A549 (cell line): ENCODE measurements at regions of chr5 and their contacts with region 1.

Region 1: GRCh38 chr5:132180134-132180745 is 47.4 kb downstream of the P4HA2 start:
- DNase-seq: peak; percentile 54 to 69
- ATAC-seq: peak; percentile 75 to 88
- H3K4me3 ChIP-seq: no peak overlapping the region
- H3K27ac ChIP-seq: no peak overlapping the region
- H3K4me1 ChIP-seq: 0 out of 3 replicates have a peak, but pooled peaks cover 3% of the 10 kb centered on the region
- CTCF ChIP-seq: peak; percentile 76
- EP300 ChIP-seq: no peak
- POLR2A ChIP-seq: no peak
- RAD21 ChIP-seq: peak; percentile 70 to 81

Region 2: GRCh38 chr5:132050136-132050535 is 130.1 kb before region 1 on chr5:
- CTCF ChIA-PET with region 1: no interaction called
- POLR2A ChIA-PET with region 1: no interaction called
- DNase-seq: no peak
- ATAC-seq: no peak
- H3K4me3 ChIP-seq: no peak overlapping the region
- H3K27ac ChIP-seq: no peak overlapping the region
- H3K4me1 ChIP-seq: no peaks in the 10 kb centered on the region
- CTCF ChIP-seq: no peak
- EP300 ChIP-seq: no peak
- POLR2A ChIP-seq: no peak
- RAD21 ChIP-seq: no peak

Region 3: DNA sequence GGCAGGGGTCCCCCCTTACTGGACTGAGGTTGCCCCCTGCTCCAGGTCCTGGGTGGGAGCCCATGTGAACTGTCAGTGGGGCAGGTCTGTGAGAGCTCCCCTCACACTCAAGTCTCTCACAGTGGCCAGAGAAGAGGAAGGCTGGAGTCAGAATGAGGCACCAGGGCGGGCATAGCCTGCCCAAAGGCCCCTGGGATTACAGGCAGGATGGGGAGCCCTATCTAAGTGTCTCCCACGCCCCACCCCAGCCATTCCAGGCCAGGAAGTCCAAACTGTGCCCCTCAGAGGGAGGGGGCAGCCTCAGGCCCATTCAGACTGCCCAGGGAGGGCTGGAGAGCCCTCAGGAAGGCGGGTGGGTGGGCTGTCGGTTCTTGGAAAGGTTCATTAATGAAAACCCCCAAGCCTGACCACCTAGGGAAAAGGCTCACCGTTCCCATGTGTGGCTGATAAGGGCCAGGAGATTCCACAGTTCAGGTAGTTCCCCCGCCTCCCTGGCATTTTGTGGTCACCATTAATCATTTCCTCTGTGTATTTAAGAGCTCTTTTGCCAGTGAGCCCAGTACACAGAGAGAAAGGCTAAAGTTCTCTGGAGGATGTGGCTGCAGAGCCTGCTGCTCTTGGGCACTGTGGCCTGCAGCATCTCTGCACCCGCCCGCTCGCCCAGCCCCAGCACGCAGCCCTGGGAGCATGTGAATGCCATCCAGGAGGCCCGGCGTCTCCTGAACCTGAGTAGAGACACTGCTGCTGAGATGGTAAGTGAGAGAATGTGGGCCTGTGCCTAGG is 106.8 kb before region 1 on chr5 and contains the start of gene CSF2:
- CTCF ChIA-PET with region 1: interaction called, 10 read pairs
- POLR2A ChIA-PET with region 1: no interaction called
- DNase-seq: no peak
- ATAC-seq: peak in 1 of 2 experiments; percentile 44; a peak in 3 of 6 replicates
- H3K4me3 ChIP-seq: no peak within 1 kb of the TSS
- H3K27ac ChIP-seq: peak within 1 kb of the TSS in 1 of 2 experiments; percentile 61; a peak in 2 of 6 replicates
- H3K4me1 ChIP-seq: peaks cover 11% of the 10 kb centered on the region; the same call in 2 of the 3 replicates
- CTCF ChIP-seq: no peak
- EP300 ChIP-seq: no peak
- POLR2A ChIP-seq: no peak
- RAD21 ChIP-seq: no peak
- polyA plus RNA-seq, gene CSF2: 0.21 TPM in 1 of 2 replicates, not detected in the other

Region 4: GRCh38 chr5:132190161-132190817 is 10.0 kb after region 1 on chr5:
- CTCF ChIA-PET with region 1: interaction called, 52 read pairs
- POLR2A ChIA-PET with region 1: no interaction called
- DNase-seq: peak; percentile 80 to 85
- ATAC-seq: peak; percentile 100
- H3K4me3 ChIP-seq: no peak overlapping the region
- H3K27ac ChIP-seq: no peak overlapping the region
- H3K4me1 ChIP-seq: no peaks in the 10 kb centered on the region
- CTCF ChIP-seq: peak; percentile 59
- EP300 ChIP-seq: no peak
- POLR2A ChIP-seq: no peak
- RAD21 ChIP-seq: peak; percentile 29 to 51; a peak in 2 of 5 replicates

Region 5: GRCh38 chr5:132203464-132203818 is 23.2 kb after region 1 on chr5:
- CTCF ChIA-PET with region 1: interaction called, 14 read pairs
- POLR2A ChIA-PET with region 1: no interaction called
- DNase-seq: no peak
- ATAC-seq: no peak
- H3K4me3 ChIP-seq: no peak overlapping the region
- H3K27ac ChIP-seq: no peak overlapping the region
- H3K4me1 ChIP-seq: no peaks in the 10 kb centered on the region
- CTCF ChIP-seq: no peak
- EP300 ChIP-seq: no peak
- POLR2A ChIP-seq: no peak
- RAD21 ChIP-seq: no peak

Region 6: DNA sequence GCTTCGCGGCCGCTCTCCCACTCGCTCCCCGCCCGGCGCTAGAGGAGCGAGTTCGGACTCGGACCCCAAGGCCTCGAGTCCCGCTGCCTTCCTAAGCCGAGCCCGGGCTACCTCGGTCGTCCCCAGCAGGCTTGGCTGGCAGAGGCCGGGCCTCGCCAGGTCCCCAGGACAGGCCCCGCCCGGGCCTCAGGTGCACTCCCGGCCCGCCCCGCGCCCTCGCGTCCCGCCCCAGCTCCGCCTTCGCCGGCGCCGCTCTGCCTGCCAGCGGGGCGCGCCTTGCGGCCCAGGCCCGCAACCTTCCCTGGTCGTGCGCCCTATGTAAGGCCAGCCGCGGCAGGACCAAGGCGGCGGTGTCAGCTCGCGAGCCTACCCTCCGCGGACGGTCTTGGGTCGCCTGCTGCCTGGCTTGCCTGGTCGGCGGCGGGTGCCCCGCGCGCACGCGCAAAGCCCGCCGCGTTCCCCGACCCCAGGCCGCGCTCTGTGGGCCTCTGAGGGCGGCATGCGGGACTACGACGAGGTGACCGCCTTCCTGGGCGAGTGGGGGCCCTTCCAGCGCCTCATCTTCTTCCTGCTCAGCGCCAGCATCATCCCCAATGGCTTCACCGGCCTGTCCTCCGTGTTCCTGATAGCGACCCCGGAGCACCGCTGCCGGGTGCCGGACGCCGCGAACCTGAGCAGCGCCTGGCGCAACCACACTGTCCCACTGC is 189.4 kb after region 1 on chr5 and contains the start of gene SLC22A5:
- CTCF ChIA-PET with region 1: interaction called, 11 read pairs
- POLR2A ChIA-PET with region 1: no interaction called
- DNase-seq: peak; percentile 62 to 84
- ATAC-seq: peak; percentile 82 to 85
- H3K4me3 ChIP-seq: peak within 1 kb of the TSS; percentile 87
- H3K27ac ChIP-seq: peak within 1 kb of the TSS; percentile 92 to 93
- H3K4me1 ChIP-seq: peaks cover 68% of the 10 kb centered on the region
- CTCF ChIP-seq: no peak
- EP300 ChIP-seq: no peak
- POLR2A ChIP-seq: peak; percentile 65
- RAD21 ChIP-seq: no peak; a peak in 1 of 5 replicates
- polyA plus RNA-seq, gene SLC22A5: 35.3 and 44.8 TPM in 2 replicates